Activated CD8-positive, alpha-beta memory T cell treated with anti-CD3 and anti-CD28 coated beads, Interleukin-2, amount 10 ng/mL, durations not matched to agents 7 days and 5 days (primary cell): ENCODE measurements at regions of chr19 and their contacts with region 1.

Region 1: DNA sequence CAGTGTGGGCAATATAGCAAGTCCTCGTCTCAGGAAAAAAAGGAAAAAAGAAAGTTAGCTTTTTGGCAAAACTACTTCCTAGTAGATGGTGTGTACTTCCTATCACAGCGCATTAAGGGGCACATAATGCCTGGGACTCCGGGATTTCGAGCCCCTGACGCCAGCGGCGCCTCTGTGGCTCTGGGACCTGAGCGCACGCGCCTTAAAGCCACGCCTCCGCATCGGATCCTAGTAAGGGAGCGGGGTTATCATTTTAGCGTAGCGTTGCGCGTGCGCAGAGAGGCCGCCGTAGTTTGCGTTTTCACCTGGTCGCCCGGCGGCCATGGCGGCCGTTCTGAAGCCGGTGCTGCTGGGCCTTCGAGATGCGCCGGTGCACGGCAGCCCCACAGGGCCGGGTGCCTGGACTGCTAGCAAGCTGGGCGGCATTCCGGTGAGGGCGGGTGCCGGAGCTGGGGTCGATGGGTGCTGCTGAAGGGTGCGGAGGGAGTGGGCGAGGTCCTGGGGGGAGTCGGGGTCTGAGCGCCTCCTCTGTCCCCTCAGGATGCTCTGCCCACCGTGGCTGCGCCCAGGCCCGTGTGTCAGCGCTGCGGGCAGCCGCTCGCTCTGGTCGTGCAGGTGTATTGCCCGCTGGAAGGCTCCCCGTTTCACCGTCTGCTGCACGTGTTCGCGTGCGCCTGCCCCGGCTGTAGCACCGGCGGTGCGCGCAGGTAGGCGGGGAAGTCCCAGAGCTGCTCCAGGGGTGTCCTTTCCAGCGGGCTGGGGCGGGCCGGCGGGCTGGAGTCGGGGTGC is at the start of gene PDCD2L:
- DNase-seq: peak; percentile 95
- ATAC-seq: peak; percentile 97
- H3K4me3 Mint-ChIP-seq: peak within 1 kb of the TSS; percentile 81
- H3K27ac Mint-ChIP-seq: peak within 1 kb of the TSS; percentile 79
- H3K4me1 Mint-ChIP-seq: peaks cover 15% of the 10 kb centered on the region
- H3K27me3 Mint-ChIP-seq: no peaks in the 10 kb centered on the region
- total RNA-seq, gene PDCD2L: 11.2 to 19.6 TPM

Region 2: GRCh38 chr19:34306213-34306661 is 98.1 kb before region 1 on chr19:
- CTCF ChIA-PET with region 1: no interaction called
- DNase-seq: no peak
- ATAC-seq: no peak
- H3K4me3 Mint-ChIP-seq: no peak overlapping the region
- H3K27ac Mint-ChIP-seq: no peak overlapping the region
- H3K4me1 Mint-ChIP-seq: peaks cover 6% of the 10 kb centered on the region
- H3K27me3 Mint-ChIP-seq: no peaks in the 10 kb centered on the region

Region 3: DNA sequence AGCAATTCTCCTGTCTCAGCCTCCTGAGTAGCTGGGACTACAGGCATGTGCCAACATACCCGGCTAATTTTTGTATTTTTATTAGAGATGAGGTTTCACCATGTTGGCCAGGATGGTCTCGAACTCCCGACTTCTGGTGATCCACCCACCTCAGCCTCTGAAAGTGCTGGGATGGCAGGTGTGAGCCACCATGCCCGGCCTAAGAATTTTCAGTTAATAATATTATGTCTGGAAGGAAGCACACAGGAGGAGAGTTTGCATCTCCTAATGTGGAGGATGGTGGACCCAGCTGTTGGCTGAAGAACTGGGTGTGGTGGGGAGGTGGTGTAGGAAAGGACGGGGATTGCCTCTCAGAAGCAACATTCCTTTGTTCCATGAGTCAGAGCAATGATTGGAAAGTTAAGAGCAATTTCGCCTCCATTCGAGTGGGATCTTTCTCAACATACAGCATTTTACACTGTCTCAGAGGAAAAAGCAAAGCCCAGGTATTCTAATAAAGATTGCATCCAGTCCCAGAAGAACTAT is 11.8 kb after region 1 on chr19:
- CTCF ChIA-PET with region 1: no interaction called
- DNase-seq: no peak
- ATAC-seq: no peak
- H3K4me3 Mint-ChIP-seq: no peak overlapping the region
- H3K27ac Mint-ChIP-seq: no peak overlapping the region
- H3K4me1 Mint-ChIP-seq: no peaks in the 10 kb centered on the region
- H3K27me3 Mint-ChIP-seq: no peaks in the 10 kb centered on the region

Region 4: DNA sequence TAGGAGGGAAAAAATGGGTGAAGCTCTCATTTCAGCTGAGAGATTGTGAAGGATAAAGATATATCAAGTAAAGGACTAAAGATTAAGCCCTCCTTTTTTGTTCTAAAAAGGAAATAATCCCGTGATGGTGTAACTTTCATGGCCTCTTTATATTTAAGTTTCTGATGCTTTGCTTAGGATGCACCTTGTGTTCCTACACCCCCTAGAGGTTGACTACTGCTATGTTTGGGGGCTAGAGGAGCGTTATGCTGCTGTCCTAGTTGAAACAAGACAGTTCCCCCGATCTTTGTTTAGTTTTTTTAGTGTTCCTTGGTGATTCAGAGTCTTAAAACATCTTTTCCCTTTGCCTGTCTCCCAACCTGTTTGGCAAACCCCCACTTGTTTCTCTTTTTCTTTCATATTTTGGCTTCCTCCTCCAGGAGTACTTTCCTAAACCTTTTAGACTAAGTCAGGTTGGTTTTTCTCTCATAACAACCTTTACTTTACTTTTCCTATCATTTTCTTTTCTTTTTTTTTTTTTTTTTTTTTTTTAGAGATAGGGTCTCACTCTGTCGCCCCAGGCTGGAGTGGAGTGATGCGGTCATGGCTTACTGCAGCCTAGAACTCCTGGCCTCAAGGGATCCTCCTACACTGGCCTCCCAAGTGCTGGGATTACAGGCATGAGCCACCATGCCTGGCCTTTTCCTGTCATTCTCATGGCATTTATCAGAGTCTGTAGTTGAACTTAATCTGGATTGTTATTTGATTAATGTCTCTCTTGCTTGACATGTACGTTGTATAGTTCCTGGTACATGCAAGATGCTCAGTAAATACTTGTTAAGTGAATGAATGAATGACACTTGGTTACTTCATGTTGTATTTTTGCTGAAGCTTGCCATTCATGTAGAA is 26.7 kb after region 1 on chr19:
- CTCF ChIA-PET with region 1: interaction called, 18 read pairs
- DNase-seq: peak; percentile 73
- ATAC-seq: peak; percentile 59
- H3K4me3 Mint-ChIP-seq: peak overlapping the region; percentile 89
- H3K27ac Mint-ChIP-seq: peak overlapping the region; percentile 76
- H3K4me1 Mint-ChIP-seq: peaks cover 32% of the 10 kb centered on the region
- H3K27me3 Mint-ChIP-seq: no peaks in the 10 kb centered on the region